PC-9 (cell line): ENCODE measurements at regions of chr2 and their contacts with region 1.

Region 1: GRCh38 chr2:160736148-160737030 is 242.8 kb upstream of the RBMS1 start:
- DNase-seq: peak; percentile 5 to 58
- H3K4me3 ChIP-seq: no peak overlapping the region
- H3K27ac ChIP-seq: peak overlapping the region; percentile 42
- H3K4me1 ChIP-seq: peaks cover 11% of the 10 kb centered on the region
- H3K27me3 ChIP-seq: no peaks in the 10 kb centered on the region
- CTCF ChIP-seq: no peak

Region 2: GRCh38 chr2:160747491-160748169 is 11.2 kb after region 1 on chr2:
- CTCF ChIA-PET with region 1: no interaction called
- POLR2A ChIA-PET with region 1: interaction called, 32 read pairs
- intact Hi-C with region 1: no loop called
- DNase-seq: peak; percentile 26 to 75
- H3K4me3 ChIP-seq: 0 out of 2 replicates have a peak overlapping the region, but pooled peaks have one; percentile 9
- H3K27ac ChIP-seq: peak overlapping the region; percentile 59
- H3K4me1 ChIP-seq: peaks cover 50% of the 10 kb centered on the region
- H3K27me3 ChIP-seq: no peaks in the 10 kb centered on the region
- CTCF ChIP-seq: no peak

Region 3: DNA sequence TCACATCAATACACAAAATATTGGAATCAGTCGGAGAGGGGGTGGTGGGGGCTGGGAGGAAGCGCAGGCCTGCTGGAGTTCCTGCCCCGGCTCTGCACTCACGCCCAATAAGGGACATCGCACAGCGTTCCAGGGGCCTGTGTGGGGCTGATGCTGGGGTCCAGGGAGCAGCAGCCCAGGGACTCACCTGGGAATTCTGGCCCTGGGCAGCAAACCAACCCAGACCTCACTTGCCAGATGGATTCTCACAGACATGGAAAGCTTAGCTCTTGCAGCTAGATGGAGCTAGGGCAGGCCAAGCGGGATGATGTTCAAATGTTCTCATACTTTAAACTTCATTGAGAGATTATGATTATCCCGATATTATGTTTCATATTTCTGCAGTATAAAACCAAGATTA is 157.2 kb after region 1 on chr2:
- CTCF ChIA-PET with region 1: no interaction called
- POLR2A ChIA-PET with region 1: no interaction called
- intact Hi-C with region 1: no loop called
- DNase-seq: no peak
- H3K4me3 ChIP-seq: no peak overlapping the region
- H3K27ac ChIP-seq: no peak overlapping the region
- H3K4me1 ChIP-seq: no peaks in the 10 kb centered on the region
- H3K27me3 ChIP-seq: no peaks in the 10 kb centered on the region
- CTCF ChIP-seq: no peak